Naive thymus-derived CD4-positive, alpha-beta T cell (primary cell): ENCODE measurements at regions of chr7 and their contacts with region 1.

Region 1: GRCh38 chr7:50206453-50207250 is 97.9 kb upstream of the IKZF1 start:
- DNase-seq: peak in 8 of 9 donors; percentile 53 to 85 (median 72)
- ATAC-seq: peak; percentile 67
- H3K4me3 ChIP-seq: peak overlapping the region; percentile 32
- H3K4me3 Mint-ChIP-seq: peak overlapping the region; percentile 54 to 87 (median 78)
- H3K27ac ChIP-seq: peak overlapping the region; percentile 66
- H3K27ac Mint-ChIP-seq: peak overlapping the region; percentile 86 to 98 (median 96)
- H3K4me1 ChIP-seq: peaks cover 20 to 73% of the 10 kb centered on the region in 2 donors
- H3K4me1 Mint-ChIP-seq: peaks cover 65 to 94% (median 81%) of the 10 kb centered on the region in 7 donors
- H3K27me3 ChIP-seq: no peaks in the 10 kb centered on the region
- H3K27me3 Mint-ChIP-seq: no peaks in the 10 kb centered on the region

Region 2: GRCh38 chr7:50142425-50143017 is 64.1 kb before region 1 on chr7:
- CTCF ChIA-PET with region 1: interaction called, 10 read pairs
- POLR2A ChIA-PET with region 1: interaction called, 12 read pairs
- intact Hi-C with region 1: loop called (anchors 1 to 2 kb)
- DNase-seq: peak in 7 of 9 donors; percentile 43 to 72 (median 62)
- ATAC-seq: peak; percentile 83
- H3K4me3 ChIP-seq: no peak overlapping the region
- H3K4me3 Mint-ChIP-seq: peak overlapping the region in 9 of 10 donors; percentile 13 to 86 (median 64)
- H3K27ac ChIP-seq: peak overlapping the region; percentile 55
- H3K27ac Mint-ChIP-seq: peak overlapping the region in 8 of 9 donors; percentile 16 to 91 (median 62)
- H3K4me1 ChIP-seq: peaks cover 3% of the 10 kb centered on the region in 2 donors
- H3K4me1 Mint-ChIP-seq: peaks cover 0 to 37% (median 12%) of the 10 kb centered on the region in 7 donors
- H3K27me3 ChIP-seq: no peaks in the 10 kb centered on the region
- H3K27me3 Mint-ChIP-seq: peaks cover 0 to 18% (median 0%) of the 10 kb centered on the region in 5 donors

Region 3: GRCh38 chr7:50229964-50230363 is 23.3 kb after region 1 on chr7:
- CTCF ChIA-PET with region 1: interaction called, 8 read pairs
- POLR2A ChIA-PET with region 1: interaction called, 24 read pairs
- intact Hi-C with region 1: loop called in 1 of 2 experiments (anchors 1 kb)
- DNase-seq: no peak
- ATAC-seq: no peak
- H3K4me3 ChIP-seq: no peak overlapping the region
- H3K4me3 Mint-ChIP-seq: no peak overlapping the region
- H3K27ac ChIP-seq: no peak overlapping the region
- H3K27ac Mint-ChIP-seq: peak overlapping the region in 1 of 9 donors; percentile 81
- H3K4me1 ChIP-seq: peaks cover 15 to 20% of the 10 kb centered on the region in 2 donors
- H3K4me1 Mint-ChIP-seq: peaks cover 31 to 44% (median 39%) of the 10 kb centered on the region in 7 donors
- H3K27me3 ChIP-seq: no peaks in the 10 kb centered on the region
- H3K27me3 Mint-ChIP-seq: no peaks in the 10 kb centered on the region

Region 4: GRCh38 chr7:50304158-50304910 is 97.7 kb after region 1 on chr7 and contains the start of gene IKZF1:
- CTCF ChIA-PET with region 1: interaction called, 147 read pairs
- POLR2A ChIA-PET with region 1: interaction called, 416 read pairs
- intact Hi-C with region 1: loop called (anchors 1 kb)
- DNase-seq: peak; percentile 38 to 75 (median 58)
- ATAC-seq: peak; percentile 54
- H3K4me3 ChIP-seq: peak within 1 kb of the TSS; percentile 84
- H3K4me3 Mint-ChIP-seq: peak within 1 kb of the TSS; percentile 93 to 100 (median 99)
- H3K27ac ChIP-seq: peak within 1 kb of the TSS; percentile 90
- H3K27ac Mint-ChIP-seq: peak within 1 kb of the TSS; percentile 91 to 100 (median 98)
- H3K4me1 ChIP-seq: peaks cover 13 to 33% of the 10 kb centered on the region in 2 donors
- H3K4me1 Mint-ChIP-seq: peaks cover 37 to 57% (median 53%) of the 10 kb centered on the region in 7 donors
- H3K27me3 ChIP-seq: no peaks in the 10 kb centered on the region
- H3K27me3 Mint-ChIP-seq: peaks cover 0 to 2% (median 0%) of the 10 kb centered on the region in 5 donors
- total RNA-seq, gene IKZF1: 388 to 548 (median 463) TPM

Region 5: GRCh38 chr7:50342616-50343114 is 136.0 kb after region 1 on chr7:
- CTCF ChIA-PET with region 1: interaction called, 13 read pairs
- POLR2A ChIA-PET with region 1: interaction called, 42 read pairs
- intact Hi-C with region 1: no loop called
- DNase-seq: peak in 6 of 9 donors; percentile 46 to 67 (median 54)
- ATAC-seq: peak; percentile 46
- H3K4me3 ChIP-seq: peak overlapping the region; percentile 22
- H3K4me3 Mint-ChIP-seq: peak overlapping the region in 8 of 10 donors; percentile 77 to 89 (median 84)
- H3K27ac ChIP-seq: peak overlapping the region; percentile 93
- H3K27ac Mint-ChIP-seq: peak overlapping the region in 3 of 9 donors; percentile 90 to 99 (median 97)
- H3K4me1 ChIP-seq: peaks cover 94% of the 10 kb centered on the region in 2 donors
- H3K4me1 Mint-ChIP-seq: peaks cover 0 to 93% (median 65%) of the 10 kb centered on the region in 7 donors
- H3K27me3 ChIP-seq: no peaks in the 10 kb centered on the region
- H3K27me3 Mint-ChIP-seq: no peaks in the 10 kb centered on the region

Region 6: GRCh38 chr7:50369143-50370026 is 162.7 kb after region 1 on chr7:
- CTCF ChIA-PET with region 1: interaction called, 181 read pairs
- POLR2A ChIA-PET with region 1: interaction called, 325 read pairs
- intact Hi-C with region 1: loop called (anchors 1 kb)
- DNase-seq: peak in 7 of 9 donors; percentile 72 to 86 (median 81)
- ATAC-seq: peak; percentile 84
- H3K4me3 ChIP-seq: peak overlapping the region; percentile 15
- H3K4me3 Mint-ChIP-seq: peak overlapping the region; percentile 8 to 89 (median 60)
- H3K27ac ChIP-seq: peak overlapping the region; percentile 94
- H3K27ac Mint-ChIP-seq: peak overlapping the region in 6 of 9 donors; percentile 80 to 100 (median 98)
- H3K4me1 ChIP-seq: peaks cover 84 to 96% of the 10 kb centered on the region in 2 donors
- H3K4me1 Mint-ChIP-seq: peaks cover 63 to 99% (median 96%) of the 10 kb centered on the region in 7 donors
- H3K27me3 ChIP-seq: no peaks in the 10 kb centered on the region
- H3K27me3 Mint-ChIP-seq: no peaks in the 10 kb centered on the region

Region 7: GRCh38 chr7:50467817-50468610 is 261.4 kb after region 1 on chr7:
- CTCF ChIA-PET with region 1: interaction called, 4 read pairs
- POLR2A ChIA-PET with region 1: no interaction called
- intact Hi-C with region 1: loop called in 1 of 2 experiments (anchors 1 kb)
- DNase-seq: peak; percentile 61 to 79 (median 76)
- ATAC-seq: peak; percentile 97
- H3K4me3 ChIP-seq: peak overlapping the region; percentile 12
- H3K4me3 Mint-ChIP-seq: peak overlapping the region; percentile 12 to 80 (median 70)
- H3K27ac ChIP-seq: no peak overlapping the region
- H3K27ac Mint-ChIP-seq: peak overlapping the region in 7 of 9 donors; percentile 35 to 88 (median 62)
- H3K4me1 ChIP-seq: no peaks in the 10 kb centered on the region
- H3K4me1 Mint-ChIP-seq: peaks cover 8 to 14% (median 11%) of the 10 kb centered on the region in 7 donors
- H3K27me3 ChIP-seq: no peaks in the 10 kb centered on the region
- H3K27me3 Mint-ChIP-seq: peaks cover 0 to 21% (median 0%) of the 10 kb centered on the region in 5 donors

Region 8: GRCh38 chr7:50805447-50806119 is 598.9 kb after region 1 on chr7:
- CTCF ChIA-PET with region 1: no interaction called
- POLR2A ChIA-PET with region 1: no interaction called
- intact Hi-C with region 1: no loop called
- DNase-seq: no peak
- ATAC-seq: no peak
- H3K4me3 ChIP-seq: no peak overlapping the region
- H3K4me3 Mint-ChIP-seq: no peak overlapping the region
- H3K27ac ChIP-seq: no peak overlapping the region
- H3K27ac Mint-ChIP-seq: no peak overlapping the region
- H3K4me1 ChIP-seq: no peaks in the 10 kb centered on the region
- H3K4me1 Mint-ChIP-seq: peaks cover 0 to 4% (median 0%) of the 10 kb centered on the region in 7 donors
- H3K27me3 ChIP-seq: no peaks in the 10 kb centered on the region
- H3K27me3 Mint-ChIP-seq: peaks cover 0 to 18% (median 8%) of the 10 kb centered on the region in 5 donors